HepG2 (cell line): ENCODE measurements at regions of chr19 and their contacts with region 1.

Region 1: GRCh38 chr19:30877661-30878113 is 471.5 kb downstream of the TSHZ3 start:
- DNase-seq: no peak
- ATAC-seq: no peak
- H3K4me3 ChIP-seq: no peak overlapping the region
- H3K27ac ChIP-seq: no peak overlapping the region
- H3K4me1 ChIP-seq: no peaks in the 10 kb centered on the region
- H3K27me3 ChIP-seq: no peaks in the 10 kb centered on the region
- CTCF ChIP-seq: no peak
- EP300 ChIP-seq: no peak
- POLR2A ChIP-seq: no peak
- RAD21 ChIP-seq: no peak

Region 2: DNA sequence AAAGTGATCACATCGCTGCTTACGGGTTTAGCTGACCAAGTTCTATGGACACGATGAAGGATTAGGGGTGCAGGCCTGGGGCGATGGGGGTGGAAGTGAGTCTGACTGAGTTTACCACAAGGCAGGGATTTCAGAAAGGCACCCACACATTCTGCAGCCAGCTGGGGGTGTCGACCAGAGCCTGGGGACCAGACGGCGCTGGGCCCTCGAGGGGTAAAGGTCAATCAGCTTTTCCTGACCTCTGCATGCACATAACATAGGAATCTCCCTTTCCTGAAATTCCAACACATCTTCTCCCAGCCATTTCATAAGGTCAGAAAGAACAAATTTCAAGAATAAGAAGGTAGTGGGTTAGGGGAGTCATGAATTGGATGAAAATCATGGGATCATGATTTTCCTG is 413.5 kb before region 1 on chr19:
- CTCF ChIA-PET with region 1: no interaction called
- POLR2A ChIA-PET with region 1: no interaction called
- in situ Hi-C with region 1: no loop called
- intact Hi-C with region 1: loop called (anchors 5 kb)
- DNase-seq: no peak
- ATAC-seq: no peak
- H3K4me3 ChIP-seq: no peak overlapping the region
- H3K27ac ChIP-seq: no peak overlapping the region
- H3K4me1 ChIP-seq: no peaks in the 10 kb centered on the region
- H3K27me3 ChIP-seq: no peaks in the 10 kb centered on the region
- CTCF ChIP-seq: no peak
- EP300 ChIP-seq: no peak
- POLR2A ChIP-seq: no peak
- RAD21 ChIP-seq: no peak